ENCODE measurements at regions of chr10 and their contacts with region 1.

Region 1: GRCh38 chr10:72273410-72274212 is at the start of gene DDIT4:
- DNase-seq: peak; percentile 97
- ATAC-seq: peak; percentile 89
- H3K4me3 ChIP-seq: peak within 1 kb of the TSS; percentile 92
- H3K27ac ChIP-seq: peak within 1 kb of the TSS; percentile 96
- H3K4me1 ChIP-seq: peaks cover 12% of the 10 kb centered on the region
- H3K27me3 ChIP-seq: no peaks in the 10 kb centered on the region
- CTCF ChIP-seq: no peak
- EP300 ChIP-seq: 0 out of 4 replicates have a peak, but pooled peaks have one; percentile 37 to 39
- POLR2A ChIP-seq: peak; percentile 100
- RAD21 ChIP-seq: 0 out of 2 replicates have a peak, but pooled peaks have one; percentile 16
- polyA plus RNA-seq, gene DDIT4: 2.1 to 5.0 TPM

Region 2: GRCh38 chr10:72126184-72126871 is 147.3 kb before region 1 on chr10:
- CTCF ChIA-PET with region 1: interaction called, 19 read pairs
- POLR2A ChIA-PET with region 1: no interaction called
- RAD21 ChIA-PET with region 1: interaction called, 33 read pairs
- SMC1A ChIA-PET with region 1: interaction called, 28 read pairs
- in situ Hi-C with region 1: no loop called
- intact Hi-C with region 1: no loop called
- DNase-seq: no peak
- ATAC-seq: peak; percentile 42
- H3K4me3 ChIP-seq: no peak overlapping the region
- H3K27ac ChIP-seq: no peak overlapping the region
- H3K4me1 ChIP-seq: no peaks in the 10 kb centered on the region
- H3K27me3 ChIP-seq: no peaks in the 10 kb centered on the region
- CTCF ChIP-seq: peak; percentile 13 to 46 (median 28); a peak in 4 of 6 replicates
- EP300 ChIP-seq: no peak
- POLR2A ChIP-seq: no peak
- RAD21 ChIP-seq: peak; percentile 57

Region 3: GRCh38 chr10:72204296-72204695 is 69.3 kb before region 1 on chr10:
- CTCF ChIA-PET with region 1: no interaction called
- POLR2A ChIA-PET with region 1: no interaction called
- RAD21 ChIA-PET with region 1: no interaction called
- SMC1A ChIA-PET with region 1: no interaction called
- in situ Hi-C with region 1: no loop called
- intact Hi-C with region 1: no loop called
- DNase-seq: no peak
- ATAC-seq: no peak
- H3K4me3 ChIP-seq: no peak overlapping the region
- H3K27ac ChIP-seq: no peak overlapping the region
- H3K4me1 ChIP-seq: no peaks in the 10 kb centered on the region
- H3K27me3 ChIP-seq: no peaks in the 10 kb centered on the region
- CTCF ChIP-seq: no peak
- EP300 ChIP-seq: no peak
- POLR2A ChIP-seq: no peak
- RAD21 ChIP-seq: no peak

Region 4: DNA sequence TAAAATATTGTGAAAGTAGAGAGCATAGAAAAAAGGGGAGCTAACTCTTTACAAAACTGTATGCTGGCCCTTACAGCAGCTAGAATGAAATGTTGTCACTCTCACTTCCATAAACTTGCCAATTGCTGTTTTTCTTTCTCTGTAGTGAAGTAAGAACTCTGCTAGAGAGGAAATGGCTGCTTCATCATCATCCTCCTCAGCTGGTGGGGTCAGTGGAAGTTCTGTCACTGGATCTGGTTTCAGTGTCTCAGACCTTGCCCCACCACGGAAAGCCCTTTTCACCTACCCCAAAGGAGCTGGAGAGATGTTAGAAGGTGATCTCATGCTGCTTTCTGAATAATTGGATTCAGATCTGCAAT is 49.9 kb before region 1 on chr10:
- CTCF ChIA-PET with region 1: interaction called, 7 read pairs
- POLR2A ChIA-PET with region 1: interaction called, 6 read pairs
- RAD21 ChIA-PET with region 1: interaction called, 9 read pairs
- SMC1A ChIA-PET with region 1: interaction called, 16 read pairs
- in situ Hi-C with region 1: no loop called
- intact Hi-C with region 1: no loop called
- DNase-seq: no peak
- ATAC-seq: peak; percentile 71
- H3K4me3 ChIP-seq: no peak overlapping the region
- H3K27ac ChIP-seq: peak overlapping the region; percentile 47
- H3K4me1 ChIP-seq: peaks cover 29% of the 10 kb centered on the region
- H3K27me3 ChIP-seq: no peaks in the 10 kb centered on the region
- CTCF ChIP-seq: no peak
- EP300 ChIP-seq: no peak
- POLR2A ChIP-seq: no peak
- RAD21 ChIP-seq: no peak

Region 5: GRCh38 chr10:72260588-72261322 is 12.9 kb before region 1 on chr10:
- CTCF ChIA-PET with region 1: interaction called, 59 read pairs
- POLR2A ChIA-PET with region 1: interaction called, 267 read pairs
- RAD21 ChIA-PET with region 1: interaction called, 200 read pairs
- SMC1A ChIA-PET with region 1: interaction called, 275 read pairs
- in situ Hi-C with region 1: no loop called
- intact Hi-C with region 1: loop called (anchors 1 kb)
- DNase-seq: peak; percentile 88
- ATAC-seq: peak; percentile 80
- H3K4me3 ChIP-seq: peak overlapping the region; percentile 68
- H3K27ac ChIP-seq: peak overlapping the region; percentile 95
- H3K4me1 ChIP-seq: peaks cover 68% of the 10 kb centered on the region
- H3K27me3 ChIP-seq: no peaks in the 10 kb centered on the region
- CTCF ChIP-seq: peak in 2 of 3 experiments; percentile 15 to 39; a peak in 2 of 6 replicates
- EP300 ChIP-seq: no peak; a peak in 2 of 4 replicates
- POLR2A ChIP-seq: peak; percentile 77
- RAD21 ChIP-seq: peak; percentile 9; the same call in 1 of the 2 replicates

Region 6: GRCh38 chr10:72297968-72298773 is 24.6 kb after region 1 on chr10:
- CTCF ChIA-PET with region 1: interaction called, 16 read pairs
- POLR2A ChIA-PET with region 1: interaction called, 59 read pairs
- RAD21 ChIA-PET with region 1: interaction called, 34 read pairs
- SMC1A ChIA-PET with region 1: interaction called, 43 read pairs
- in situ Hi-C with region 1: no loop called
- intact Hi-C with region 1: loop called (anchors 1 kb)
- DNase-seq: peak; percentile 91
- ATAC-seq: peak; percentile 84
- H3K4me3 ChIP-seq: peak overlapping the region; percentile 80
- H3K27ac ChIP-seq: peak overlapping the region; percentile 100
- H3K4me1 ChIP-seq: peaks cover 40% of the 10 kb centered on the region
- H3K27me3 ChIP-seq: no peaks in the 10 kb centered on the region
- CTCF ChIP-seq: no peak
- EP300 ChIP-seq: peak in 1 of 2 experiments; percentile 24; a peak in 1 of 4 replicates
- POLR2A ChIP-seq: peak; percentile 83
- RAD21 ChIP-seq: no peak

Region 7: DNA sequence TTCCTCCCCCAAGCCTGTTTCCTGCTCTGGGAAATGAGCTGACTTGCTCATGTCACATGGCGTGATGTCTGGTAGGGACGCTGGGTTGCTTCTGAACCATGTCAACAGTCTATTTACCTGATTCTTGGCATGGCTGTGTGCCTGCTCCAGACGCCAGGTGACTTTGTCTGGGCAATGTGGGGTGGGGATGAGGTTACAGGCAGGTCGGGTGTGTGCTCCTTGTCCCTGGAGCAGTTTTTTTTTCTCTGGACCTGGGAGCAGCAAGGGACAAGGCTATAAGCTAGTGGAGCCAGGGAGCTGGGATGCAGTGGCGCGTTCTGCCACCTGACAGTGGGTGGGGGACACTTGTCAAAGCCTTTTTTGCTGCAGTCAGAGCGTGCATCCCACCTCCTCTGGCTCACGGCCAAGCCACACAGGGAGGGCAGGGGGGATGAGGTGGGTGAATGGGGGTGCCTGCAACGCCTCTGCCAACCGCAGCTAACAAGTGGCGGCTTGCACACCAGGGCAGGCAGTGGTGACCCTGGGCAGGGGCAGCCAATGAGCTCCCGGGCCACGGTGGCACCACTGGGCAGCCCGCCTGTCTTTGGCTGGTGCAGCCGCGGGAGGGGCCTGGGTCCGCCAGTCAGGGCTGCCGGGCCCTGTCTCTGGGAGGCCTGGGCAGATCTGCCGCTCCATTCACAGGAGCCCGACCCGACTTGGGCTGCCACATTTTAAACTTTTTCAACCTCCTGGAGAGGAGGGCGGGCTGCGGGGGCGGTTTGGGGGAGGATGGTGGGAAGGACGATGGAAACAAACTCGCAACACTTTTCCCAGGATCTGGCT is 58.2 kb after region 1 on chr10:
- CTCF ChIA-PET with region 1: interaction called, 275 read pairs
- POLR2A ChIA-PET with region 1: interaction called, 56 read pairs
- RAD21 ChIA-PET with region 1: interaction called, 170 read pairs
- SMC1A ChIA-PET with region 1: interaction called, 140 read pairs
- in situ Hi-C with region 1: no loop called
- intact Hi-C with region 1: loop called (anchors 1 kb)
- DNase-seq: peak; percentile 96
- ATAC-seq: peak; percentile 80
- H3K4me3 ChIP-seq: 0 out of 2 replicates have a peak overlapping the region, but pooled peaks have one; percentile 4
- H3K27ac ChIP-seq: peak overlapping the region; percentile 95
- H3K4me1 ChIP-seq: peaks cover 76% of the 10 kb centered on the region
- H3K27me3 ChIP-seq: no peaks in the 10 kb centered on the region
- CTCF ChIP-seq: peak; percentile 1 to 50 (median 13); a peak in 1 of 6 replicates
- EP300 ChIP-seq: peak; percentile 31 to 85; a peak in 3 of 4 replicates
- POLR2A ChIP-seq: peak; percentile 68
- RAD21 ChIP-seq: no peak

Region 8: GRCh38 chr10:72435570-72435969 is 162.0 kb after region 1 on chr10:
- CTCF ChIA-PET with region 1: no interaction called
- POLR2A ChIA-PET with region 1: no interaction called
- RAD21 ChIA-PET with region 1: no interaction called
- SMC1A ChIA-PET with region 1: no interaction called
- in situ Hi-C with region 1: no loop called
- intact Hi-C with region 1: no loop called
- DNase-seq: no peak
- ATAC-seq: no peak
- H3K4me3 ChIP-seq: no peak overlapping the region
- H3K27ac ChIP-seq: no peak overlapping the region
- H3K4me1 ChIP-seq: no peaks in the 10 kb centered on the region
- H3K27me3 ChIP-seq: no peaks in the 10 kb centered on the region
- CTCF ChIP-seq: no peak
- EP300 ChIP-seq: no peak
- POLR2A ChIP-seq: no peak
- RAD21 ChIP-seq: no peak